ENCODE measurements at regions of chr15 and their contacts with region 1.

Region 1: GRCh38 chr15:87722941-87723691 is 533.4 kb downstream of the NTRK3 start:
- DNase-seq: no peak
- ATAC-seq: no peak
- H3K4me3 Mint-ChIP-seq: no peak overlapping the region
- H3K27ac Mint-ChIP-seq: no peak overlapping the region
- H3K4me1 Mint-ChIP-seq: no peaks in the 10 kb centered on the region
- H3K27me3 Mint-ChIP-seq: no peaks in the 10 kb centered on the region
- CTCF ChIP-seq: no peak

Region 2: GRCh38 chr15:87461621-87462020 is 261.5 kb before region 1 on chr15:
- CTCF ChIA-PET with region 1: no interaction called
- POLR2A ChIA-PET with region 1: interaction called, 11 read pairs
- intact Hi-C with region 1: no loop called
- DNase-seq: no peak
- ATAC-seq: no peak
- H3K4me3 Mint-ChIP-seq: no peak overlapping the region
- H3K27ac Mint-ChIP-seq: no peak overlapping the region
- H3K4me1 Mint-ChIP-seq: no peaks in the 10 kb centered on the region
- H3K27me3 Mint-ChIP-seq: no peaks in the 10 kb centered on the region
- CTCF ChIP-seq: no peak

Region 3: GRCh38 chr15:87508086-87508485 is 215.0 kb before region 1 on chr15:
- CTCF ChIA-PET with region 1: no interaction called
- POLR2A ChIA-PET with region 1: no interaction called
- intact Hi-C with region 1: no loop called
- DNase-seq: no peak
- ATAC-seq: no peak
- H3K4me3 Mint-ChIP-seq: no peak overlapping the region
- H3K27ac Mint-ChIP-seq: no peak overlapping the region
- H3K4me1 Mint-ChIP-seq: no peaks in the 10 kb centered on the region
- H3K27me3 Mint-ChIP-seq: no peaks in the 10 kb centered on the region
- CTCF ChIP-seq: no peak